ENCODE measurements at regions of chr2 and their contacts with region 1.

Region 1: GRCh38 chr2:54015798-54016699 is 45.3 kb upstream of the PSME4 start:
- DNase-seq: peak; percentile 73
- H3K4me3 ChIP-seq: no peak overlapping the region
- H3K27me3 ChIP-seq: no peaks in the 10 kb centered on the region
- CTCF ChIP-seq: no peak

Region 2: GRCh38 chr2:53952519-53952918 is 63.5 kb before region 1 on chr2:
- CTCF ChIA-PET with region 1: no interaction called
- POLR2A ChIA-PET with region 1: no interaction called
- DNase-seq: no peak
- H3K4me3 ChIP-seq: no peak overlapping the region
- H3K27me3 ChIP-seq: no peaks in the 10 kb centered on the region
- CTCF ChIP-seq: no peak

Region 3: GRCh38 chr2:54455563-54456361 is 439.7 kb after region 1 on chr2 and contains the start of gene SPTBN1:
- CTCF ChIA-PET with region 1: no interaction called
- POLR2A ChIA-PET with region 1: interaction called, 16 read pairs
- DNase-seq: peak; percentile 41
- H3K4me3 ChIP-seq: peak within 1 kb of the TSS; percentile 85
- H3K27me3 ChIP-seq: no peaks in the 10 kb centered on the region
- CTCF ChIP-seq: no peak
- polyA plus RNA-seq, gene SPTBN1: 33.8 and 39.1 TPM in 2 replicates